Calu3 (cell line): ENCODE measurements at regions of chr17 and their contacts with region 1.

Region 1: GRCh38 chr17:52306314-52306713 is 147.8 kb upstream of the CA10 start:
- DNase-seq: peak; percentile 66
- H3K4me3 Mint-ChIP-seq: peak overlapping the region; percentile 20
- H3K27ac Mint-ChIP-seq: peak overlapping the region; percentile 93
- H3K4me1 Mint-ChIP-seq: peaks cover 34% of the 10 kb centered on the region
- H3K27me3 Mint-ChIP-seq: no peaks in the 10 kb centered on the region
- CTCF ChIP-seq: no peak

Region 2: GRCh38 chr17:52147872-52148271 is 158.4 kb before region 1 on chr17:
- CTCF ChIA-PET with region 1: interaction called, 3 read pairs
- intact Hi-C with region 1: loop called (anchors 2 kb)
- DNase-seq: no peak
- H3K4me3 Mint-ChIP-seq: peak overlapping the region; percentile 13
- H3K27ac Mint-ChIP-seq: peak overlapping the region; percentile 84
- H3K4me1 Mint-ChIP-seq: peaks cover 62% of the 10 kb centered on the region
- H3K27me3 Mint-ChIP-seq: no peaks in the 10 kb centered on the region
- CTCF ChIP-seq: no peak

Region 3: GRCh38 chr17:52395308-52395707 is 89.0 kb after region 1 on chr17:
- CTCF ChIA-PET with region 1: no interaction called
- intact Hi-C with region 1: no loop called
- DNase-seq: no peak
- H3K4me3 Mint-ChIP-seq: no peak overlapping the region
- H3K27ac Mint-ChIP-seq: no peak overlapping the region
- H3K4me1 Mint-ChIP-seq: no peaks in the 10 kb centered on the region
- H3K27me3 Mint-ChIP-seq: no peaks in the 10 kb centered on the region
- CTCF ChIP-seq: no peak

Region 4: DNA sequence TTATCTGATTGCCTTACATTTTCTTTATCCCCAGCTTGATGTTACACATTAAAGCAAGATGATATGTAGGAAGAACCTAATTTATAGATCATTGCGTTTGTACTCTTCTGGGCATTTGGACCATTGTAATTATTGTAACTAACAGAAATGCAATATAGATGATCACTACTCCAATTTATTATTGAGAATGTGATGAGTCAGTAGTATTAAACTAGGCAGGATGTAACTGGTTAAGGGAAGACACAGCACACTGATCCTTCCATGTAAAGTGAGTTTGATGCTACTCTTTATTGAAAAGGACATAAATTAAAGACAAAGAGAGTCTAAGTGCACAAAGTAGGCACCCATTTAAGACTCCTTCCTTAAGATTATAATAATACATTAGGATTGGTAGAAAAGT is 1740.3 kb after region 1 on chr17:
- CTCF ChIA-PET with region 1: no interaction called
- intact Hi-C with region 1: no loop called
- DNase-seq: no peak
- H3K4me3 Mint-ChIP-seq: no peak overlapping the region
- H3K27ac Mint-ChIP-seq: no peak overlapping the region
- H3K4me1 Mint-ChIP-seq: no peaks in the 10 kb centered on the region
- H3K27me3 Mint-ChIP-seq: no peaks in the 10 kb centered on the region
- CTCF ChIP-seq: no peak